Body of pancreas (tissue), 4 donors: ENCODE measurements at regions of chr19 and their contacts with region 1.

Region 1: GRCh38 chr19:35557539-35558399 is 5.7 kb downstream of the ATP4A start:
- DNase-seq: peak; percentile 54 to 94 (median 86)
- ATAC-seq: peak; percentile 76
- H3K4me3 ChIP-seq: peak overlapping the region in 1 of 2 donors; percentile 19
- H3K27ac ChIP-seq: peak overlapping the region in 1 of 4 donors; percentile 47
- H3K4me1 ChIP-seq: peaks cover 40% of the 10 kb centered on the region
- H3K27me3 ChIP-seq: no peaks in the 10 kb centered on the region
- CTCF ChIP-seq: no peak
- POLR2A ChIP-seq: no peak

Region 2: DNA sequence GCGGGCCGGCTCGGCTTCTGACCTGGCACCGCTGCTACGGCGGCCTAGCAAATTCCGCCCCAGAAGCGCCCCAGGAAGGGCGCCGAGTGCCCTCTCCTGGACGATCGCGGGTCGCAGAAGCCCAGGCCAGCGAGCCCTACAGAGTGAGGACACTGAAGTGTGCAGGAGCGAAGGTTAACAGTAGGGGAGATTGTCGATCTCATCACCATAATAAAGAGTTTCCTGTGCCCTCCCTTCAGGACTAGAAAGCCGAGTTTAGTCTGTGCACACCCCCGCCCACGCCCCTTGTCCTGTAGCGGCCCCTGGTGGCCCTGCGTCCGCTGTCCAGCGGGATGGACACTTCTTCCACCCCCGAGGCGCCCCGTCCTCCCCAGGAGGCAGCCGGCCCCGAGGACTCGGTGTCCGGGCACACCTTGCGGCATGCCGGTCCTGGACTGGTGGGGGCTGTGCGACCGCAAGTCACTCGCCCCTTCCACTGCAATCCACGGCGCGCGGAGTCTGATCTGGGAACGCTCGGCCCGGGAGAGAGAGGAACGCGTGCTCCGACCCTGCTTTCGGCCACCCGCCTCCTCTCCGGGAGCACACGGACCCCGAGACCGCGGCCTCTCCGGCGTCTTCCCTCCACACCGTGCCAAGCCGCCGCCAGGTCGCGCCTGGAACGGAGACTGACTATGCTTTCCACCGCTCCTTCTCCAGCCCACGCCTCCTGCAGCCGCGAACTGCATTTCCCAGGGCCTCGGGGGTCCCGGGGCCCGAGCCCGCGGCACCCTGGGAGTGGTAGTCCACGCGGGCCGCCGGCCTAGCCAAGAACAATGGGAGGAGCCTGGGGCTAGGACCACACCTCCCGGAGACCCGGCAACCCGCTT is 159.3 kb after region 1 on chr19:
- intact Hi-C with region 1: loop called (anchors 10 kb)
- DNase-seq: peak; percentile 96 to 98 (median 98)
- ATAC-seq: peak; percentile 89
- H3K4me3 ChIP-seq: peak overlapping the region; percentile 26 to 50
- H3K27ac ChIP-seq: peak overlapping the region; percentile 68 to 91 (median 88)
- H3K4me1 ChIP-seq: peaks cover 34% of the 10 kb centered on the region
- H3K27me3 ChIP-seq: no peaks in the 10 kb centered on the region
- CTCF ChIP-seq: peak; percentile 85 to 99 (median 93)
- POLR2A ChIP-seq: peak in 1 of 3 donors; percentile 25

Region 3: DNA sequence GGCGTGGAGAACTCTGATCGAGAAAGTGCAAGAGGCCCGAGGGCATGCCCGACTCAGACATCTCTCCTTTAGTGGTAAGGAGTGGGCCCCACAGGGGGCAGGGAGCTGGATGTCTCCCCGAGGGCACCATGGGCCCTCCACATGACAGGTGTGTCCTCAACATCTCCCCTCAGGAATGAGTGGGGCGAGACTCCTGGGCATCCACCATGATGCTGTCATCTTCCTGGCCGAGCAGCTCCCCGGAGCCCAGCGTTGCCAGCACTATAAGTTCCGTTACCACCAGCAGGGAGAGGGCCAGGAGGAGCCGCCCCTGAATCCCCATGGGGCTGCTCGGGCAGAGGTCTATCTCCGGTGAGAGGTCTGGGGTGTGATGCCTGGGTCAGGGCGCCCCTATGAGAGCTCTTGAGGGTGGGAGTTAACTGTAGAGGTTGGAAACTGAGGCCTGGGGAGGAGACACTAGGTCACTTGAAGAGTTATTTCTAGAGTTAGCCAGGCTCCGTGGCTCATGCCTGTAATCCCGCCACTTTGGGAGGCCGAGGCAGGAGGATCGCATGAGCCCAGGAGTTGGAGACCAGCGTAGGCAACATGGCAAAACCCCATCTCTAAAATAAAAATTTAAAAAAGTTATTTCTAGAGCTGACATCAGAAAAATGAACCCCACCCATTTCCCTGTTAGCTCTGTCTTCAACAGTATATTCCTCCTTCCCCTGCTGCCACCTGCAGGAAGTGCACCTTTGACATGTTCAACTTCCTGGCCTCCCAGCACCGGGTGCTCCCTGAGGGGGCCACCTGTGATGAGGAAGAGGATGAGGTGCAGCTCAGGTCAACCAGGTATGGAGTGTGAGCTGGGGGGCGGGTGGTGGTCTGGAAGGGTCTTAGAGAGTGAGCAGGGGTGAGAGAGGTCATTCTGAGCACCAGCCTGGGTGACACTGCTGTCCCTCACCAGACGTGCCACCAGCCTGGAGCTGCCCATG is 179.4 kb after region 1 on chr19:
- intact Hi-C with region 1: no loop called
- DNase-seq: no peak
- ATAC-seq: no peak
- H3K4me3 ChIP-seq: no peak overlapping the region
- H3K27ac ChIP-seq: no peak overlapping the region
- H3K4me1 ChIP-seq: peaks cover 15% of the 10 kb centered on the region
- H3K27me3 ChIP-seq: no peaks in the 10 kb centered on the region
- CTCF ChIP-seq: no peak
- POLR2A ChIP-seq: no peak